ENCODE measurements at regions of chr7 and their contacts with region 1.

Region 1: GRCh38 chr7:117399820-117400422 is 27.4 kb downstream of the ASZ1 start:
- DNase-seq: no peak
- H3K4me3 ChIP-seq: no peak overlapping the region
- H3K27ac ChIP-seq: no peak overlapping the region
- H3K4me1 ChIP-seq: no peaks in the 10 kb centered on the region
- H3K27me3 ChIP-seq: no peaks in the 10 kb centered on the region
- CTCF ChIP-seq: peak in 3 of 11 experiments; percentile 21 to 24 (median 21)
- POLR2A ChIP-seq: no peak

Region 2: GRCh38 chr7:117176206-117176605 is 223.7 kb before region 1 on chr7:
- intact Hi-C with region 1: no loop called
- DNase-seq: no peak
- H3K4me3 ChIP-seq: no peak overlapping the region
- H3K27ac ChIP-seq: no peak overlapping the region
- H3K4me1 ChIP-seq: no peaks in the 10 kb centered on the region
- H3K27me3 ChIP-seq: no peaks in the 10 kb centered on the region
- CTCF ChIP-seq: no peak
- POLR2A ChIP-seq: no peak

Region 3: DNA sequence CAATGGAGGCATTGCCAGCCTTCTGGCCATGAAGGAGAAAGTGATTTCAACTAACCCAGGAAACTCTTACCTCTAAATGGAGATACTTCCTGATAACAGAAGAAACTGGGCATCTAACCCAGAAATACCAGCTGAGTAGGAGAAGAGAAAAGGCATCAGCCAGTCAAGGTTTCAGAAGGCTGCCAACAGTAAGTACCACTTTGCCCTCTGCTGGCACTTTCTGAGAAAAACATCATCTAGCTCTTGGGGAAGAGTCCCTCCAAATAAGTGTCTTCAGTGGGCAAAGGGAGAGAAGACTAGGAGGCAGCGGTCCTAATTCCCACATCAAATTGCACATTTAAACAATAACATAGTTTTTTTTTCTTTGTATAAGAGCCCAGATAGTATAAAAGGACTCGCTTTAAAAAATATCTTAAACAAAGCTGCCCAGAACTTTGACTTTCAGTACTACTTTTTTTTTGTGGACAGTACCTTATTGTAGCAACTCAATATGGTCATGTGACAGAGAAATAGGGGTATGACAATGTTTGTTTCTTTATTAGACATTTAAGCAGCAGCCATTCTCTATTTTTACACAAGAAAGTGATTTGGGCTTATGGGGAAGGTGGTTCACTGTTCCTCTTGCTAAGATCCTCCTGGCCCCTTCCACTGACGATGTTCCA is 316.0 kb after region 1 on chr7:
- intact Hi-C with region 1: loop called (anchors 10 kb)
- DNase-seq: no peak
- H3K4me3 ChIP-seq: no peak overlapping the region
- H3K27ac ChIP-seq: no peak overlapping the region
- H3K4me1 ChIP-seq: no peaks in the 10 kb centered on the region
- H3K27me3 ChIP-seq: no peaks in the 10 kb centered on the region
- CTCF ChIP-seq: peak in 6 of 11 experiments; percentile 8 to 35 (median 12)
- POLR2A ChIP-seq: no peak

Measured in spleen (tissue), 13 donors.